ENCODE measurements at regions of chr2 and their contacts with region 1.

Region 1: GRCh38 chr2:175855794-175856453 is 146.1 kb downstream of the LNPK start:
- DNase-seq: peak; percentile 85
- H3K4me3 ChIP-seq: peak overlapping the region in 1 of 4 donors; percentile 11
- H3K27ac ChIP-seq: peak overlapping the region; percentile 73 to 83 (median 78)
- H3K4me1 ChIP-seq: peaks cover 0 to 35% (median 14%) of the 10 kb centered on the region in 4 donors
- H3K27me3 ChIP-seq: no peaks in the 10 kb centered on the region
- CTCF ChIP-seq: no peak
- EP300 ChIP-seq: peak in 2 of 4 donors; percentile 9 to 51
- POLR2A ChIP-seq: no peak

Region 2: GRCh38 chr2:175804122-175804521 is 51.8 kb before region 1 on chr2:
- intact Hi-C with region 1: loop called (anchors 5 kb)
- DNase-seq: no peak
- H3K4me3 ChIP-seq: no peak overlapping the region
- H3K27ac ChIP-seq: no peak overlapping the region
- H3K4me1 ChIP-seq: peaks cover 0 to 33% (median 29%) of the 10 kb centered on the region in 4 donors
- H3K27me3 ChIP-seq: no peaks in the 10 kb centered on the region
- CTCF ChIP-seq: no peak
- EP300 ChIP-seq: no peak
- POLR2A ChIP-seq: no peak

Region 3: GRCh38 chr2:175929850-175930249 is 73.9 kb after region 1 on chr2:
- intact Hi-C with region 1: loop called (anchors 10 kb)
- DNase-seq: no peak
- H3K4me3 ChIP-seq: no peak overlapping the region
- H3K27ac ChIP-seq: peak overlapping the region in 3 of 4 donors; percentile 20 to 29 (median 28)
- H3K4me1 ChIP-seq: peaks cover 0 to 9% (median 4%) of the 10 kb centered on the region in 4 donors
- H3K27me3 ChIP-seq: no peaks in the 10 kb centered on the region
- CTCF ChIP-seq: no peak
- EP300 ChIP-seq: no peak
- POLR2A ChIP-seq: no peak

Region 4: GRCh38 chr2:176039375-176039774 is 183.5 kb after region 1 on chr2:
- intact Hi-C with region 1: no loop called
- DNase-seq: no peak
- H3K4me3 ChIP-seq: no peak overlapping the region
- H3K27ac ChIP-seq: no peak overlapping the region
- H3K4me1 ChIP-seq: no peaks in the 10 kb centered on the region
- H3K27me3 ChIP-seq: no peaks in the 10 kb centered on the region
- CTCF ChIP-seq: no peak
- EP300 ChIP-seq: no peak
- POLR2A ChIP-seq: no peak

Measured in sigmoid colon (tissue), 7 donors.